Calu3 (cell line): ENCODE measurements at regions of chr2 and their contacts with region 1.

Region 1: GRCh38 chr2:212912445-212913103 is 238.8 kb downstream of the IKZF2 start:
- DNase-seq: peak; percentile 58
- H3K4me3 Mint-ChIP-seq: peak overlapping the region; percentile 63
- H3K27ac Mint-ChIP-seq: peak overlapping the region; percentile 95
- H3K4me1 Mint-ChIP-seq: peaks cover 56% of the 10 kb centered on the region
- H3K27me3 Mint-ChIP-seq: no peaks in the 10 kb centered on the region
- CTCF ChIP-seq: no peak

Region 2: DNA sequence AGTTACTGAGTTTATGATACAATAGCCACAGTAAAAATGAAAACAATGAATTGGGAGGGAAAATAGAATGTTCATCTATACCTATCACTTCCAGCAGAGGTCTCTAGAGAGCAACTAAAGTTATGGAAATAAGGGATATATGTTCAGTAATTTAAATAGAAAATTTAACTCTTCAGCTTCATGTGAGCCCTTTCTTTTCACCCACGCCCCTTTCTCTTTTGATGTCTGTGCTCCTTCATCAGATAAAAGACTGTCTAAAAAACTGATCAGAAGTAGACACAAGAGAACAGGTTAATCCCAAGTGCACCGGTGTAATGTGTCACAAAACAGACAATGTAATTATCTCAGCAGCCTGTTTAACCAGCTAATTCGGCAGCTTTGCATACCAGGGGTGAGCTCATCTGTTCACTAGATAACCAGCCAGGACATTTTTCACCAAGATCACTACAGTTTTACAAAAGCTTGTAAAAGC is 135.5 kb before region 1 on chr2:
- CTCF ChIA-PET with region 1: no interaction called
- intact Hi-C with region 1: loop called (anchors 5 kb)
- DNase-seq: peak; percentile 3
- H3K4me3 Mint-ChIP-seq: no peak overlapping the region
- H3K27ac Mint-ChIP-seq: no peak overlapping the region
- H3K4me1 Mint-ChIP-seq: no peaks in the 10 kb centered on the region
- H3K27me3 Mint-ChIP-seq: no peaks in the 10 kb centered on the region
- CTCF ChIP-seq: peak; percentile 25

Region 3: GRCh38 chr2:212940816-212941215 is 28.2 kb after region 1 on chr2:
- CTCF ChIA-PET with region 1: no interaction called
- intact Hi-C with region 1: no loop called
- DNase-seq: peak; percentile 69
- H3K4me3 Mint-ChIP-seq: no peak overlapping the region
- H3K27ac Mint-ChIP-seq: peak overlapping the region; percentile 30
- H3K4me1 Mint-ChIP-seq: peaks cover 17% of the 10 kb centered on the region
- H3K27me3 Mint-ChIP-seq: no peaks in the 10 kb centered on the region
- CTCF ChIP-seq: no peak

Region 4: GRCh38 chr2:212990697-212991096 is 78.1 kb after region 1 on chr2:
- CTCF ChIA-PET with region 1: no interaction called
- intact Hi-C with region 1: no loop called
- DNase-seq: no peak
- H3K4me3 Mint-ChIP-seq: no peak overlapping the region
- H3K27ac Mint-ChIP-seq: no peak overlapping the region
- H3K4me1 Mint-ChIP-seq: no peaks in the 10 kb centered on the region
- H3K27me3 Mint-ChIP-seq: no peaks in the 10 kb centered on the region
- CTCF ChIP-seq: no peak